ENCODE measurements at regions of chr10 and their contacts with region 1.

Region 1: GRCh38 chr10:27742195-27743011 is 3.2 kb downstream of the MKX start:
- DNase-seq: peak; percentile 59
- H3K4me3 ChIP-seq: peak overlapping the region; percentile 47 to 53
- H3K27ac ChIP-seq: peak overlapping the region; percentile 78 to 87
- H3K4me1 ChIP-seq: peaks cover 3% of the 10 kb centered on the region
- H3K27me3 ChIP-seq: peaks cover 5% of the 10 kb centered on the region
- CTCF ChIP-seq: peak; percentile 40 to 90 (median 72)
- POLR2A ChIP-seq: no peak

Region 2: DNA sequence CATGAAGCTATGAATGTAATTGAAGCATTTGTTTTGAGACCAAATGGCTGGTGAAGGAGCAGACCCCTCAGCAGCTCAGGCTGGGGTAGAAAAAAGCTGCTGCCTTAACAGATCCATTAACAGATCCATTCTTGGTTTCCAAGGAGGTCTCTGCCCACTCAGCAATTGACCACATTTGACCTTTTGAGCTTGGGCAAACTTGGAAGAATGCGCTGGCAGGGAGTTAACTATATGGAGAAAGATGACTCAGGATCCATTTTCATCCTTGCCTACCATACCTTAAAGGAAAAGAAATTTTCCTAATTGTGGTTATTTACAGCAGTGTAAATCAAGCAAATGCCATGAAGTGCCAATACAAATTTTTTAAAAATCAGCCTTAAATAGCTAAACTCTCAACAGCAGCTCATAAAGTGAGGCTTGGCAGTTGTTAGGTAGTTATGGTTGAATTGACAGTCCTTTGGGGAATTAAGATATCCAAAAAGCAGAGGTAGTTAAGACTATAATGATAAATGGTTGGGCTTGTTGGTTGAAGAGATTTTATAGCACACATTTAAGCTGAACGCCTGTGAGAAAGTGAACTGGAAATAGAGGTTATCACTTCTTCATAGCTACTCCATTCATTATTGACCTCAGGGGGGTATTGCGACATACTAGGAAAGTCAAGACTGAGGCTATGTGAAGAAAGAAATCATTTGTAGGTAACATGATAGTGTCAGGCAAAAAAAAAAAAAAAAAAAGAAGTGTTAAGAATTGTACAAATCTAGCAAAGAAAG is 80.7 kb before region 1 on chr10:
- intact Hi-C with region 1: no loop called
- DNase-seq: no peak
- H3K4me3 ChIP-seq: no peak overlapping the region
- H3K27ac ChIP-seq: no peak overlapping the region
- H3K4me1 ChIP-seq: no peaks in the 10 kb centered on the region
- H3K27me3 ChIP-seq: no peaks in the 10 kb centered on the region
- CTCF ChIP-seq: no peak
- POLR2A ChIP-seq: no peak

Region 3: GRCh38 chr10:27724287-27724686 is 18.1 kb before region 1 on chr10:
- intact Hi-C with region 1: loop called (anchors 2 kb)
- DNase-seq: no peak
- H3K4me3 ChIP-seq: no peak overlapping the region
- H3K27ac ChIP-seq: peak overlapping the region in 1 of 2 donors; percentile 59
- H3K4me1 ChIP-seq: no peaks in the 10 kb centered on the region
- H3K27me3 ChIP-seq: no peaks in the 10 kb centered on the region
- CTCF ChIP-seq: peak in 1 of 4 experiments; percentile 10
- POLR2A ChIP-seq: no peak

Region 4: GRCh38 chr10:27815261-27815660 is 72.9 kb after region 1 on chr10:
- intact Hi-C with region 1: loop called (anchors 5 kb)
- DNase-seq: no peak
- H3K4me3 ChIP-seq: no peak overlapping the region
- H3K27ac ChIP-seq: no peak overlapping the region
- H3K4me1 ChIP-seq: no peaks in the 10 kb centered on the region
- H3K27me3 ChIP-seq: no peaks in the 10 kb centered on the region
- CTCF ChIP-seq: no peak
- POLR2A ChIP-seq: no peak

Region 5: DNA sequence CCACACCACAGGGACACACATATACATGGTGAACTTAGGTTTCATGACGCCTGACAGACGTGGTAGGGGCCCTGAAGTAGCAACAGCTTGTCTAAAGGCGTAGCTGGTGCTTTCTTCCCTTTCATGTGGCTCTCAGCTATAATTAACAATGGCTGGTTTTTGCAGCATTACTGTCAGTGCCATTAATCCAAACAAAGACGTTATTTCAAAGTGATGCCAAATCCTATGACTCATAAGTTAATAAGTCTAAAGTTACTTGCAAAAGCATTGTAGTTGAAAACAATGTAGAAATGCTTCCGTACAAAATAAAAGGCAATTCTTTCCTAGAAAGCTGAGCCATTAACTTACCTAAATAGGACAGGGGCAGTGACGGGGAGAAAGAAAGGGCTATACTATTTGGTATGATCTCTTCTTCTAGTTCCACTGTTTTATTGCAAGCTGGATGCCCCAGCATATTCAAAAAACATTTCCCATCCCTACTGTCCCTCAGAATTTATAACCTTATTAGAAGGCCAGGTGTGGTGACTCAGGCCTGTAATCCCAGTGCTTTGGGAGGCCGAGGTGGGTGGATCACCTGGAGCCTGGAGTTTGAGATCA is 151.1 kb after region 1 on chr10:
- intact Hi-C with region 1: no loop called
- DNase-seq: no peak
- H3K4me3 ChIP-seq: no peak overlapping the region
- H3K27ac ChIP-seq: no peak overlapping the region
- H3K4me1 ChIP-seq: no peaks in the 10 kb centered on the region
- H3K27me3 ChIP-seq: no peaks in the 10 kb centered on the region
- CTCF ChIP-seq: no peak
- POLR2A ChIP-seq: no peak

Region 6: DNA sequence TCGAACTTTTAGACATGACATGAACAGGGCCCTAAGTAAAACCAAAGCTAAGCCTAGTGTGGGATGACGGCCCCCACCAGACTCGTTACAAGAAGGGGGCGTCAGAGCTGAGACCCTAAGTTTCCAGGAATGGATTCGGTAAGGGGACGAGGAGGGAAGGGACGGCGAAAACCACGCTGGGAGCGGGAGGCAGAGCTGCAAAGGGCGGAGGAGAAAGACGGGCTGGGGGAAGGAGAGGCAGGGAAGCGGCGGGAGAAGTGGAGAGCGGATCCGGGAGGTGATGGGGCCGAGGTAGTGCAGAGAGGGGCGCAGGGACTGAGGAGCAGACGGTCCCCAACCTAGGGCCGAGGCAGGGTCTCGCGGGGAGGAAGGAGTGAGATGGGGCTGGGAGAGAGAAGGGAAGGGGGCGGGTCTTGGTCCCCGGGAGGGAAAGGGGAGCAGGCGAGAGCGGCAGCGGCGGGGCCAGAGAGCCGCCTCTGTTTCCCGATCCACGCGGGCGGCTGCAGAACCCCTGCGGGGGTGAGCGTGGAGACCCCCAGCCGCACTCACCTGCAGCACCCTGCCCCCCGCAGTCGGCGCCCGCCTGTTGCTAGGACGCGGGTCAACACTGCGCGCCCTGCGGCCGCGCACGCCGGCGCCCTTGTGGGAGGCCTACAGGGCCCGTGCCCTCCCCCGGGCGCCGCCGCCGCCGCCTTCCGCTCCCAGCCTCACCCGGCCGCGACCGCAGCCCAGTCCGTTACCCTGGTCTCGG is 256.0 kb after region 1 on chr10:
- intact Hi-C with region 1: loop called (anchors 5 kb)
- DNase-seq: peak; percentile 8
- H3K4me3 ChIP-seq: peak overlapping the region; percentile 45 to 46
- H3K27ac ChIP-seq: peak overlapping the region; percentile 61 to 74
- H3K4me1 ChIP-seq: no peaks in the 10 kb centered on the region
- H3K27me3 ChIP-seq: no peaks in the 10 kb centered on the region
- CTCF ChIP-seq: no peak
- POLR2A ChIP-seq: no peak

Region 7: DNA sequence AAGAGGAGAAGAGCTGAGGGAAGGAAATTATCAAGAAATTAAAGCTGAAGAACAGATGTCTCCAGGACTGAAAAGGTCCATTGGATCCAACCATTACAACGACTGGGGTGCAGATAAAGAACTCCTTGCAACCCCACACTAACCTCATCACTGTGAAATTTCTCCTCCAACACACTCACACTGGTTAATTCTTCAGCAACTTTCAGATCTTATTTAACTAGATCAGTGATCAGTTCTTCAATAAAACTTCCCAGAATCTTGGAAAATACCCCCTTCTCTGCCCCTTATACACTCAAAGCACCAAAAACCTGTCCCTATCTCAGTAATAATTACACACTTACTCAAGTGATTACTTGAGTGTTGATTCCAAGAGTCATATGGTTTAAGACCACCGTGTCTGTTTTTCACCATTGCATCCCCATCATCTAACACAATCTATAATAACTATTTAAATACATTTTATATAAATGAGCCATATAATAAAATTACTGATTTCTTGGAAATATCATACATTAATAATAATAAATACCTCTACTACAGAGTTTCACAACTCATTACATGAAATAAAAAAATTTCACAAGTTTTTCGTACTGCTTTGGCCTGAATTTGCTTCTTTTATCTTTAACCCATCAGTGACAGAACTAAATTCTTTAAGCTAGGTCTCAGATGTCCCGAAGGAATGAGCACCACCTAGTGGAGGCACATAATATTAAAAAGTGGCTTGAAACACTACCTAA is 436.8 kb after region 1 on chr10:
- intact Hi-C with region 1: loop called (anchors 2 kb)
- DNase-seq: peak; percentile 36
- H3K4me3 ChIP-seq: no peak overlapping the region
- H3K27ac ChIP-seq: peak overlapping the region; percentile 37 to 54
- H3K4me1 ChIP-seq: no peaks in the 10 kb centered on the region
- H3K27me3 ChIP-seq: no peaks in the 10 kb centered on the region
- CTCF ChIP-seq: peak; percentile 43 to 86 (median 75)
- POLR2A ChIP-seq: no peak

Region 8: DNA sequence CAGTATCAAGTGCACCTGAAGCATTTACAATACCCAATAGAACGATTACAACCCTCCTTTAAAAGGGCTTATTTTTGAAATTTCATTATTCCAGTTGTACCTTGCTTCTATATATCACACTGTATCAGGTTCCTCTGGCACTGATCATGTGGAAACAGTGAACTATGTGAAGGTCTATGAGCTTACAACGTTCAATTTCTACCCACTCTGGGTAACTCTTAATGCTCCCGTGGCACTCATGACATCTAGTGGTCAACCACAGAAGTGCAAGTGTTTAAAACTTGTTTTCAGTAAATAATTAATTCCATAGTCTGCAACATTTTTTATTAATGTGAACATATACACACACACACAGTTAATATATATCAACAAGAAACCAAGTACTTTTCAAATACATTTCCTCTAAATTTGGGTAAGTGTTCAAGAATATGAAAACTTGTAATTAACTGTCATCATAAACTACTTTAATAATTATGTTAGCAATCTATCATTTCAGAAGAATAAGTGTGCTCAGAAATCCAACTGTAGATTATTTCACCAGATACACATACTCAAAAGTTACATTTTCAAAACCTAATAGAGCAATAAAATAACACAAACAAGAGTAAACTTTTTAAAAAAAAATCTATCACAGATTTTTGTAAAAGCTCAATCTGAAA is 499.5 kb after region 1 on chr10:
- intact Hi-C with region 1: loop called (anchors 2 kb)
- DNase-seq: peak; percentile 42
- H3K4me3 ChIP-seq: no peak overlapping the region
- H3K27ac ChIP-seq: no peak overlapping the region
- H3K4me1 ChIP-seq: no peaks in the 10 kb centered on the region
- H3K27me3 ChIP-seq: no peaks in the 10 kb centered on the region
- CTCF ChIP-seq: peak; percentile 79 to 86 (median 84)
- POLR2A ChIP-seq: no peak

Region 9: GRCh38 chr10:28302638-28303488 is 560.5 kb after region 1 on chr10 and contains the start of gene MPP7:
- intact Hi-C with region 1: loop called (anchors 5 kb)
- DNase-seq: peak; percentile 98
- H3K4me3 ChIP-seq: peak within 1 kb of the TSS; percentile 82 to 89
- H3K27ac ChIP-seq: peak within 1 kb of the TSS; percentile 89 to 95
- H3K4me1 ChIP-seq: no peaks in the 10 kb centered on the region
- H3K27me3 ChIP-seq: no peaks in the 10 kb centered on the region
- CTCF ChIP-seq: peak; percentile 20 to 71 (median 44)
- POLR2A ChIP-seq: peak; percentile 70
- total RNA-seq, gene MPP7: 10.1 to 16.1 TPM

Measured in prostate gland (tissue), 2 donors.